Spleen (tissue), 13 donors: ENCODE measurements at regions of chr18 and their contacts with region 1.

Region 1: DNA sequence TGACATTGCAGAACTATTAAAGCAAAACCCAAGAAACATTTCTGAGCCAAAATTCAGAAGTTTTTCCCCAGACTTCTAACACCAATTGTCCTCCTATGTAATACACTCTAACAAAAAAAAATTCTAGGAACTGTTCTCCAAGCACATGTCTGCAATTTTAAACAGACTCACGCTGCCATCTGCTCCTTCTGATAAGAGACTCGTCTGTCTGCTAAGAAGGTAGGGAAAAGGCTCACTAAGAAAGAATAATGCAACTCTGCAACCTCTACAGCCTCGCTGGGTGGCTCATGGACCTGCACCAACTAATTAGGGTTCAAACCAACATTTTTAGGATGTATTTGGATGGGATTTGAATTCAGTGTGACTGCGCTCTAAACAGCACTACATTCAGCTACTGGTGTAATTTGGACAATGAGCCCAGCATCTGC is 366.5 kb downstream of the DSC3 start:
- DNase-seq: no peak
- H3K4me3 ChIP-seq: no peak overlapping the region
- H3K27ac ChIP-seq: no peak overlapping the region
- H3K4me1 ChIP-seq: no peaks in the 10 kb centered on the region
- H3K27me3 ChIP-seq: no peaks in the 10 kb centered on the region
- CTCF ChIP-seq: no peak
- POLR2A ChIP-seq: no peak

Region 2: GRCh38 chr18:30597202-30597601 is 78.9 kb before region 1 on chr18:
- intact Hi-C with region 1: no loop called
- DNase-seq: no peak
- H3K4me3 ChIP-seq: no peak overlapping the region
- H3K27ac ChIP-seq: no peak overlapping the region
- H3K4me1 ChIP-seq: no peaks in the 10 kb centered on the region
- H3K27me3 ChIP-seq: no peaks in the 10 kb centered on the region
- CTCF ChIP-seq: no peak
- POLR2A ChIP-seq: no peak

Region 3: GRCh38 chr18:30618567-30618966 is 57.5 kb before region 1 on chr18:
- intact Hi-C with region 1: loop called (anchors 10 kb)
- DNase-seq: no peak
- H3K4me3 ChIP-seq: no peak overlapping the region
- H3K27ac ChIP-seq: no peak overlapping the region
- H3K4me1 ChIP-seq: no peaks in the 10 kb centered on the region
- H3K27me3 ChIP-seq: no peaks in the 10 kb centered on the region
- CTCF ChIP-seq: no peak
- POLR2A ChIP-seq: no peak